ENCODE measurements at regions of chr20 and their contacts with region 1.

Region 1: GRCh38 chr20:38057351-38057972 is 23.9 kb downstream of the RPRD1B start:
- DNase-seq: peak; percentile 90

Region 2: GRCh38 chr20:38043512-38044300 is 13.8 kb before region 1 on chr20:
- intact Hi-C with region 1: no loop called
- DNase-seq: no peak

Region 3: GRCh38 chr20:38073307-38074071 is 16.0 kb after region 1 on chr20:
- intact Hi-C with region 1: no loop called
- DNase-seq: no peak

Region 4: GRCh38 chr20:38321959-38322598 is 264.6 kb after region 1 on chr20:
- intact Hi-C with region 1: loop called (anchors 5 kb)
- DNase-seq: no peak